MCF 10A (cell line): ENCODE measurements at regions of chr3 and their contacts with region 1.

Region 1: DNA sequence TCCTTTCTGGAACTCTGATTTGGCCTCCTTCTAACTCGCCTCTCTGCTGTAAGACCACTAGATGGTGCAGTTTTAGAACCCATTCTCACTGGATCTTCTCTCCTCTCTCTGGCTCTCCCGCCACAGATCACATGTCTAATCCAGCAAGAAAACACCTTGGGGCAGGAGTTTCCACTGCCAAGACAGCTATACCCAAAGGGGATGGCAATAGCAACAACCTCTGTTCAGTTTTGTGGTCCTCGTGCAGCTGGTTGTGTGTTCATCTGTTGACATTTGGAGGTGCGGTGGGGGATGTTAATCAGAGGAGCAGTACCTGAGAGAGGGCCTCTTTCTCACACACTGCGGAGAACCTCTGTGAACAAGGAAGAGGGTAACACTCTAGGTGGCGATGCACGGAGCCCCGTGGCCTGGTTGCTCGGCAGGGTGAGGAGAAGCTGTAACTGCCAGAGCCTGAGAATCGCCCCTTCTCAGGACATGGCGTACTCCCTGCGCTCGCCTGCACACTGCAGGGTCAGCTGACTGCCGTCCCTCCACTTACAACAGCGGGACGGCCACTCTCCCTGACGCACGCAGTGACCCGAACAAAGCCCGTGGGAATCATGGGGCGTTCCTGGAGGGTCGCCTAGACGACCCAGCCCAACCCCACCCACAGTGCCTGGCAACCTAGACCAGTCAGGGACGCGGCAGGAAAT is at the start of gene TEX55:
- DNase-seq: peak; percentile 62
- H3K4me3 Mint-ChIP-seq: no peak within 1 kb of the TSS
- H3K27ac Mint-ChIP-seq: no peak within 1 kb of the TSS
- H3K4me1 Mint-ChIP-seq: peaks cover 14% of the 10 kb centered on the region
- H3K27me3 Mint-ChIP-seq: no peaks in the 10 kb centered on the region
- CTCF ChIP-seq: peak; percentile 58
- total RNA-seq, gene TEX55: not detected in 2 replicates

Region 2: DNA sequence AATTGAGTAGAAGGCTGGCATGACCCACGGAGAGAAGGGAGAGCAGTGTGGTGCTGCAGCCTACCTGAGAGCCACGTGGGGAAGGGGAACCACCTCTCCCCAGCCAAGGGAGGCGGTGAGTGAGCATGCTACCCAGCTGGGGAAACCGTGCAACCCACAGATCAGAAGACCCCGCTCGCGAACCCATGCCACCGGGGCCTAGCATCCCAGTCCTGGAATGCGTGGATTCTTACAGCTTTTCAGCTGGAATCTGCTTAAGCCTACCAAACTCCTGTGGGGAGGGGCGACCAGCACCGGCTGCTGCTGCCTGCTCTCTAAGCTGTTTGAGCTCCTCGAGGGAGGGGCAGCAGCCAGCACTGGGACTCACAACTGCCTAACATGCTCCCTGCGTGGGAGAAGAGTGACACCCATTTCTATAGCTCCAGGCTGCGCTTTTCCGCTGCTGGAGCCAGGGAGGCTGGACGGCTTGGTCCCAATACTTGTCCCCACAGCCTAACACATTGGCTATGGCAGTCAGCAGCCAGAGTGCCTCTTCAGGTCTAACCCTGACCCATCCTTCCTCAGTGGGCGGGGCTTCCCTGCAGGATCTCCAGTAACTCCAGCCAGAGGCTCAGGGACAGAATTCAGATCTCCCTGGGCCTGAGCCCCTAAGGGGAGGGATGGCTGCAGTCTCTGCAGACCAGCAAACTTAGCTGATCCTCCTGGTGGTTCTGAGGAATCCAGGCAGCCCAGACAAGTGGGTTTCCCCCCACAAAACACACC is 19.7 kb before region 1 on chr3:
- CTCF ChIA-PET with region 1: interaction called, 10 read pairs
- POLR2A ChIA-PET with region 1: interaction called, 4 read pairs
- intact Hi-C with region 1: no loop called
- DNase-seq: no peak
- H3K4me3 Mint-ChIP-seq: no peak overlapping the region
- H3K27ac Mint-ChIP-seq: no peak overlapping the region
- H3K4me1 Mint-ChIP-seq: no peaks in the 10 kb centered on the region
- H3K27me3 Mint-ChIP-seq: no peaks in the 10 kb centered on the region
- CTCF ChIP-seq: no peak

Region 3: GRCh38 chr3:119175872-119176756 is 30.5 kb after region 1 on chr3:
- CTCF ChIA-PET with region 1: interaction called, 12 read pairs
- POLR2A ChIA-PET with region 1: interaction called, 3 read pairs
- intact Hi-C with region 1: loop called (anchors 2 kb)
- DNase-seq: peak; percentile 83
- H3K4me3 Mint-ChIP-seq: peak overlapping the region; percentile 59
- H3K27ac Mint-ChIP-seq: peak overlapping the region; percentile 94
- H3K4me1 Mint-ChIP-seq: peaks cover 28% of the 10 kb centered on the region
- H3K27me3 Mint-ChIP-seq: no peaks in the 10 kb centered on the region
- CTCF ChIP-seq: no peak

Region 4: GRCh38 chr3:119181765-119182164 is 36.1 kb after region 1 on chr3:
- CTCF ChIA-PET with region 1: interaction called, 12 read pairs
- POLR2A ChIA-PET with region 1: no interaction called
- intact Hi-C with region 1: loop called (anchors 2 kb)
- DNase-seq: peak; percentile 38
- H3K4me3 Mint-ChIP-seq: no peak overlapping the region
- H3K27ac Mint-ChIP-seq: no peak overlapping the region
- H3K4me1 Mint-ChIP-seq: peaks cover 40% of the 10 kb centered on the region
- H3K27me3 Mint-ChIP-seq: no peaks in the 10 kb centered on the region
- CTCF ChIP-seq: no peak

Region 5: DNA sequence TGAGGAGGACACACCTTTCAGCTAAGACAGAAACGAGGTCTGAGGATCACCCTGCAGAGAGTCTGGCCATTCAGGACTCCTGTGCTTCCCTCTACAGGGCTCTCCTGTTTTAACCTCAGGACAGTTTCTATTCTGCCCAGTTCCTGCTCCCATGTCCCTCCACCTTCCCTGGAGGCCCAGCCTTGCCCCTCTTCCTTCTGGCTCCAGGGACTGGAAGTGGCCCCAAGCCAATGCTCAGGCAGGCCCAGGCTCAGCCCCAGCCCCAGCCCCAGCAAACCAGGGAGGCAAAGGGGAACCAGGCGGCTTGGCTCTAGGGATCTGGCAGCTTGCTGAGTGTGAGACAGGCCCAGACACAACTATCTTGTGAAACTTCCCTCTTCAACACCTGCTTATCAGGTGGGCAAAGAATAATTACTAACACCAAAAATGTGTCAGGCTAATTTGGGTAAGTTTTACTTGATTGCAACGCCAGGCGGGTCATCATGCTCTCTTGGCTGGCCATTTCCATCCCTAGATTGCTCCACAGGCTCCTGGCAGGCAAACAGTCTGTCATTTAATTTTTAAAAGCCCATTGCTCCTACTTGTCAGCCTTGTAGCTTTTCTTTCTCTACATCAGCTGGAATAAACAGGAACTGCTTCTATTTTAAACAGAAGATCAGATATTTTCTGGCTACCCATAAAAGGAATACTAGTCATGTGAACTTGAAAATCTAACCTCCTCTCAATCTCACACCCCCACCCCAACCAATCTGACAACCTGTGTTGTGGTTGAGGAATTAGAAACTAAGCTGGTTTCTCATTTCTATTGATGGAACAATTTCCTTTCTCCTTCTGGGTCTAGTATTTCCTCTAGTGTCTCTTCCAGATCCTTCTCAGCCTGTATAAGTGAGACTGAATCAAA is 61.2 kb after region 1 on chr3:
- CTCF ChIA-PET with region 1: interaction called, 28 read pairs
- POLR2A ChIA-PET with region 1: interaction called, 5 read pairs
- intact Hi-C with region 1: loop called (anchors 1 kb)
- DNase-seq: peak; percentile 72
- H3K4me3 Mint-ChIP-seq: no peak overlapping the region
- H3K27ac Mint-ChIP-seq: peak overlapping the region; percentile 72
- H3K4me1 Mint-ChIP-seq: peaks cover 22% of the 10 kb centered on the region
- H3K27me3 Mint-ChIP-seq: no peaks in the 10 kb centered on the region
- CTCF ChIP-seq: no peak